Panc1 (cell line): ENCODE measurements at regions of chr13 and their contacts with region 1.

Region 1: GRCh38 chr13:24220086-24220703 is 59.7 kb downstream of the SPATA13 start:
- DNase-seq: peak; percentile 50
- ATAC-seq: peak; percentile 93
- H3K4me3 ChIP-seq: no peak overlapping the region
- H3K27ac ChIP-seq: no peak overlapping the region
- H3K4me1 ChIP-seq: peaks cover 3% of the 10 kb centered on the region; the same call in 1 of the 2 replicates
- H3K27me3 ChIP-seq: no peaks in the 10 kb centered on the region
- CTCF ChIP-seq: peak; percentile 68

Region 2: GRCh38 chr13:23921451-23921888 is 298.7 kb before region 1 on chr13:
- CTCF ChIA-PET with region 1: no interaction called
- POLR2A ChIA-PET with region 1: no interaction called
- in situ Hi-C with region 1: no loop called
- intact Hi-C with region 1: loop called (anchors 10 kb)
- DNase-seq: no peak
- ATAC-seq: no peak
- H3K4me3 ChIP-seq: no peak overlapping the region
- H3K27ac ChIP-seq: no peak overlapping the region
- H3K4me1 ChIP-seq: no peaks in the 10 kb centered on the region
- H3K27me3 ChIP-seq: peaks cover 8% of the 10 kb centered on the region
- CTCF ChIP-seq: peak; percentile 64

Region 3: DNA sequence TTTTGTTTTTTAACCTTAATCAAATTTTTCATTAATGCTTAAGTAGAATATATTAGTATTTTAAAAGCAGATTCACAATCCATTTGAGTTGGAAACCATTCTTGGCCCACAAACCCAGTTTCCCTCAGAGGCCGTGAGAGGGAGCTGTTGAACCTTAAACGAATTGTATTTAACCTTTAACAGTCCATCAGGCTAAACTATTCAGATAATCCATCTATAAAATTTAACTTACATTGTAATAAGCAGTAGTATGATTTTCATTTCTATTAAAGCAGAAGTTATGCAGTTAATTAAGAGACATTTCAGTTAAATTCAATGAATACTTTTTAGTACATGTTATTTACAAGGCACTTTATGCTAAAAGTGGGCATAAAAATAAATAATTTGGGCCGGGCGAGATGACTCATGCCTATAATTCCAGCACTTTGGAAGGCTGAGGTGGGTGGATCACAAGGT is 199.8 kb before region 1 on chr13:
- CTCF ChIA-PET with region 1: interaction called, 3 read pairs
- POLR2A ChIA-PET with region 1: no interaction called
- in situ Hi-C with region 1: no loop called
- intact Hi-C with region 1: loop called (anchors 1 kb)
- DNase-seq: peak; percentile 7
- ATAC-seq: peak; percentile 73; the same call in 1 of the 2 replicates
- H3K4me3 ChIP-seq: no peak overlapping the region
- H3K27ac ChIP-seq: no peak overlapping the region
- H3K4me1 ChIP-seq: no peaks in the 10 kb centered on the region
- H3K27me3 ChIP-seq: no peaks in the 10 kb centered on the region
- CTCF ChIP-seq: peak; percentile 73; the same call in 1 of the 2 replicates

Region 4: GRCh38 chr13:24053519-24054251 is 166.5 kb before region 1 on chr13:
- CTCF ChIA-PET with region 1: no interaction called
- POLR2A ChIA-PET with region 1: no interaction called
- in situ Hi-C with region 1: no loop called
- intact Hi-C with region 1: loop called (anchors 1 kb)
- DNase-seq: peak; percentile 50
- ATAC-seq: peak; percentile 96
- H3K4me3 ChIP-seq: no peak overlapping the region
- H3K27ac ChIP-seq: no peak overlapping the region
- H3K4me1 ChIP-seq: no peaks in the 10 kb centered on the region; the same call in 1 of the 2 replicates
- H3K27me3 ChIP-seq: no peaks in the 10 kb centered on the region
- CTCF ChIP-seq: peak; percentile 84